Activated CD4-positive, alpha-beta memory T cell treated with anti-CD3 and anti-CD28 coated beads, Interleukin-2, amount 10 ng/mL, durations not matched to agents 7 days and 5 days (primary cell): ENCODE measurements at regions of chr6 and their contacts with region 1.

Region 1: DNA sequence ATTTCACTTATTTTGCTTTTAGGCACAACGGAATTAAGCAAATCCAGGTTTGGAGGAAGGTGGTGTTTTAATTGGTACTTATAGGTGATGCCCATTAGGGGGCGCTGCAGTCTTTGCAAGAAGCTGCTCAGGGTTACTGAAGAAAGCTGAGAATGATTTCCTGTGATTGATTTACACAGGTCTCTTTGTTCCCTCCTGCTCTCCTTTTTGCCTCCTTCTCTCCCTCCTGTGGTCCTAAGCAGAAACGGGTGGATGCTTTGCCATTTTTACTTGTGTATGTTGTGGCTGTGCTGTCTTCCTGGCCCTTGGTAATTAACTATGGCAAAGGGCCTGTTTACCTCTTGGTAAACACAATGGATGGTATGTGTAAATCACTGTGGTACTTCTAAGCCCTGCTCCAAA is 97.8 kb downstream of the ANKS1A start:
- DNase-seq: peak; percentile 71
- H3K4me3 Mint-ChIP-seq: no peak overlapping the region
- H3K27ac Mint-ChIP-seq: no peak overlapping the region
- H3K4me1 Mint-ChIP-seq: no peaks in the 10 kb centered on the region
- H3K27me3 Mint-ChIP-seq: no peaks in the 10 kb centered on the region

Region 2: DNA sequence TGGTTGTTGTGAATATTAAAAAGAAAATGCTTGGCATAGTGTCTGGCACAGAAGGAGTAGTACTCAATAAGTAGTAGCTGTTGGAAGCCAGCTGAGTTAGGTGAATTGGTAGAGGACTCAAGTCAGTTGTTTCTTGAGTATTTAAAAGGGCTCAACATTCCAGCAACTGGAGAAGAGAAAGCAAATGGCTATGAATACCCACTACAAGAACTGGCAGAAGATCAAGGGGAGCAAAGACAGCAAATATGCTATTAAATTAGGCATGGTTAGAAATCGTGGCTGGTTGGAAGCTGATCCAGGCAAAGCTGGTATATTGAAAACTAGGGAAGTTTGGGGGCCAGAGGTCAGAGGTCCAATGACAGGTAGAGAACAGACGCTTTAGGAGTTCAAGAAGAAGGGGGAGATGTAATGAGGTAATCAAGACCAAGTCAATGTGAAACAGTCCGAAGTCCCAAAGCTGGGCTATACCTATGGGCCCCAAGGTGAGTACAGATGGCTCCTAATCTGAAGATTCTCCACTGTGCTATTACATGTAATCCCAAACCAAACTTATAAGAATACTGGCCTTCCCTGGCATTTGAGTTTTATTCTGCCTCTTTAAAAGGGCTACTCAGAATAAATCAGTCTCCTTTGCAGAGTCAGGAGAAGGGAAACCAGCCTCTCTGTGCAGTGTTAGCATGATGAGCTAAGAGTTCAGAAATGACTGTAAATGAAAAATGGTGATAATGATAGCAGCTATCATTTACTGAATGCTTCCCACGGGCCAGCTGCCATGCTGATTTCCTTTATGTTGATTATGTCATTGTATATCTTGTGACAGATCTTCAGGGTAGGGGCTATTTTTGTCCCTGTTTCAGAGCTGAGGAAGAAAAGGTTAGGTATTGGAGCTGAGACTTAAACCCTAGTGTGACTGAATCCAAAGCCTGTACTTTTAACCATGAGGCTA is 24.5 kb after region 1 on chr6:
- CTCF ChIA-PET with region 1: interaction called, 10 read pairs
- POLR2A ChIA-PET with region 1: no interaction called
- DNase-seq: no peak
- H3K4me3 Mint-ChIP-seq: no peak overlapping the region
- H3K27ac Mint-ChIP-seq: no peak overlapping the region
- H3K4me1 Mint-ChIP-seq: peaks cover 16% of the 10 kb centered on the region
- H3K27me3 Mint-ChIP-seq: no peaks in the 10 kb centered on the region

Region 3: DNA sequence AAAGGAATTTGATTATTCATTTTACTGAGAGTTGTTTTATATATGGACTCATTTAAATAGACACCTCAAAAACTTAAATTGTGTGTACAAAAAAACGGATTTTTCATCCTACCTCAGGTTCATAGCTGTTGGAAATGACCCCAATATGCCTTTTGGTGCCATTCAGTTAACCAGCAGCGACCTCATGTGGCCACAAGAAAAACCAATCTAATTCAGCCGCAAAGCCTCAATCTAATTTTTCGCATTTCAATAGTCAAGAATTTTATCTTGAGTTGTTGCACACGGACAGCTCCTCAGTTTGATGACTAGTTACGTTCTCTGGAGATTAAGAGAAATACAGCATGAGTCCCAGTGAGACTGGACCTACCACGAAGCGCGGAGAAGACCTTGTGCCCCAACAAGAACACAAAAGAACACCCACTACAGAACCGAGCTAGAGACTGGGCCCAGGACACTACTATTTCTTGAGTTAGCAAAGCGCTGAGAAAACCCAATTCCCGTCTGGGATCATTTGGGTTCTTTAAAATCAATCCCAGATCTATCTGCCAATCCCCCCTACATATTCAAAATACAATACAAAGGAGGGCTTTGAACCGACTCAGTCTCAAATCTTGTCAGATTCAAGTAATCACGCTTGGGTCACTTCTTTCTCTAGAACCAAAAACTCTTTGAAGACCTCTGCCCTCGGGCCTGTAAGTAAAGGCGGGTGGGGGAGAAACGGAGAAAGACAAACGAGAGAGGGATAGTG is 153.2 kb after region 1 on chr6:
- CTCF ChIA-PET with region 1: interaction called, 54 read pairs
- POLR2A ChIA-PET with region 1: interaction called, 3 read pairs
- DNase-seq: peak; percentile 57
- H3K4me3 Mint-ChIP-seq: no peak overlapping the region
- H3K27ac Mint-ChIP-seq: no peak overlapping the region
- H3K4me1 Mint-ChIP-seq: peaks cover 23% of the 10 kb centered on the region
- H3K27me3 Mint-ChIP-seq: peaks cover 22% of the 10 kb centered on the region

Region 4: GRCh38 chr6:35311390-35312075 is 324.7 kb after region 1 on chr6:
- CTCF ChIA-PET with region 1: no interaction called
- POLR2A ChIA-PET with region 1: no interaction called
- DNase-seq: peak; percentile 78
- H3K4me3 Mint-ChIP-seq: peak overlapping the region; percentile 59
- H3K27ac Mint-ChIP-seq: peak overlapping the region; percentile 98
- H3K4me1 Mint-ChIP-seq: peaks cover 85% of the 10 kb centered on the region
- H3K27me3 Mint-ChIP-seq: no peaks in the 10 kb centered on the region